A673 (cell line): ENCODE measurements at regions of chr3 and their contacts with region 1.

Region 1: GRCh38 chr3:44529927-44530326 is 25.1 kb upstream of the ZKSCAN7 start:
- DNase-seq: no peak
- H3K4me3 ChIP-seq: no peak overlapping the region
- H3K27ac ChIP-seq: no peak overlapping the region
- H3K4me1 ChIP-seq: no peaks in the 10 kb centered on the region
- H3K27me3 ChIP-seq: no peaks in the 10 kb centered on the region
- CTCF ChIP-seq: peak; percentile 39

Region 2: GRCh38 chr3:44323341-44323955 is 206.5 kb before region 1 on chr3:
- CTCF ChIA-PET with region 1: no interaction called
- POLR2A ChIA-PET with region 1: no interaction called
- intact Hi-C with region 1: loop called (anchors 5 kb)
- DNase-seq: peak; percentile 69
- H3K4me3 ChIP-seq: no peak overlapping the region
- H3K27ac ChIP-seq: no peak overlapping the region
- H3K4me1 ChIP-seq: no peaks in the 10 kb centered on the region
- H3K27me3 ChIP-seq: no peaks in the 10 kb centered on the region
- CTCF ChIP-seq: peak; percentile 72

Region 3: DNA sequence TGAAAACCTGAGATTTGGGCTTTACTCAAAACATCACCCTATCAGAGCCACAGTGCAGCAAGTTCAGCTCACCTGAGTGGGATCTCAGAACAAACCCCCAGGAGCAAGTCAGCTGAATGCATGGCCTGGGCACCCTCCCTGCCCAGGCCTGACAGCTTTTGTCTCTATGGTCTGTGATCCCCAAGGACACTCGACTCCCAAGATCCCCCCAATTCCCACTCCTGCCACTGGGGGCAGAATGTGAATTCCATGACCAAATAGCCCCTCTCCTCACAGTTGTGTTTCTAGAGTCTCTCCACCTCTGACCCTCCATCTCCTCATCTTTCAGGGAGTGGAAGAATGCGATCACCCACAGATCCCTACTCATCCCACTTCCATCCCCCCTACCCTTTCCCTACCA is 111.4 kb before region 1 on chr3:
- CTCF ChIA-PET with region 1: no interaction called
- POLR2A ChIA-PET with region 1: no interaction called
- intact Hi-C with region 1: no loop called
- DNase-seq: no peak
- H3K4me3 ChIP-seq: no peak overlapping the region
- H3K27ac ChIP-seq: no peak overlapping the region
- H3K4me1 ChIP-seq: no peaks in the 10 kb centered on the region
- H3K27me3 ChIP-seq: no peaks in the 10 kb centered on the region
- CTCF ChIP-seq: peak; percentile 24

Region 4: DNA sequence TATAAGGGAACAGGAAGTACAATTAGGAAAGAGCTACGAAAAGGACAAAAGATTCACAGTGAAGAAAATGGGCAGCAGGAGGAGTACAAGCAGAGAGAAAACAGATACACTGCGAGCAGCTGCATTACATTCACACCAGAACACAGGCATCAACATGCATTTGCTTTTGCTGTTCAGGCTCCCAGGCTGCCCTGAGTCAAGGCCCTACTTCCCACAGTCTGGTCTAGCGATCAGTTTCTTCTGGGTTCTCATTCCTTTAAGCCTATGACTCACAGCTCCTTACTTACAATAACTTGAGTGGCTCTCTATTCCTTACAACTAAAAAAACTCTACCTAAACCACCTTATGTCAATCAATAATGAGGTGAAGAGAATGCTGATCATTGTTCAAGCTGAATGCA is 28.0 kb before region 1 on chr3:
- CTCF ChIA-PET with region 1: no interaction called
- POLR2A ChIA-PET with region 1: no interaction called
- intact Hi-C with region 1: no loop called
- DNase-seq: no peak
- H3K4me3 ChIP-seq: no peak overlapping the region
- H3K27ac ChIP-seq: no peak overlapping the region
- H3K4me1 ChIP-seq: no peaks in the 10 kb centered on the region
- H3K27me3 ChIP-seq: no peaks in the 10 kb centered on the region
- CTCF ChIP-seq: no peak

Region 5: DNA sequence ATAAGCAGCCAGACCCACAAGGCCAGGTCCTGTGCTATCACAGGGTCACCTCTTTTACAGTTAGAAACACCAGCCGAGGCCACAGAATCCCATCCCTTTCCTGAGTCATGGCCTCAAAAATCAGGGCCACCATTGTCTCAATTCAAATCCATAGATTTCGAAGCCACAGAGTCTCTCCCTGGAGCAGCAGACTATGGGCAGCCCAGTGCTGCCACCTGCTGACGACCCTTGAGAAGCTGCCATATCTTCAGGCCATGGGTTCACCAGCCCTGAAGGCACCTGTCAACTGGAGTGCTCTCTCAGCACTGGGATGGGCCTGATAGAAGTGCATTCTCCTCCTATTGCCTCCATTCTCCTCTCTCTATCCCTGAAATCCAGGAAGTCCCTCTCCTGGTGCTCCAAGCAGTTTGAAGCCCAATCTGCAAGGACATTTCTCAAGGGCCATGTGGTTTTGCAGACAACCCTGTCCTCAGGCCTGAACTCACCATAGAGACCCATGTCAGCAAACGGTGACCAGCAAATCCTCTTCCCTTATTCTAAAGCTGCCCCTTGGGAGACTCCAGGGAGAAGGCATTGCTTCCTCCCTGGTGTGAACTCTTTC is 384.0 kb after region 1 on chr3:
- CTCF ChIA-PET with region 1: no interaction called
- POLR2A ChIA-PET with region 1: no interaction called
- intact Hi-C with region 1: loop called (anchors 1 kb)
- DNase-seq: peak; percentile 71
- H3K4me3 ChIP-seq: no peak overlapping the region
- H3K27ac ChIP-seq: no peak overlapping the region
- H3K4me1 ChIP-seq: peaks cover 7% of the 10 kb centered on the region
- H3K27me3 ChIP-seq: no peaks in the 10 kb centered on the region
- CTCF ChIP-seq: peak; percentile 66